ENCODE measurements at regions of chr1 and their contacts with region 1.

Region 1: GRCh38 chr1:89358287-89358893 is 5.5 kb upstream of the GBP6 start:
- DNase-seq: peak; percentile 92
- ATAC-seq: peak; percentile 85
- H3K4me3 Mint-ChIP-seq: peak overlapping the region; percentile 20
- H3K27ac Mint-ChIP-seq: peak overlapping the region; percentile 82
- H3K4me1 Mint-ChIP-seq: peaks cover 61% of the 10 kb centered on the region
- H3K27me3 Mint-ChIP-seq: no peaks in the 10 kb centered on the region

Region 2: GRCh38 chr1:89085781-89086180 is 272.6 kb before region 1 on chr1:
- CTCF ChIA-PET with region 1: interaction called, 16 read pairs
- DNase-seq: peak; percentile 56
- ATAC-seq: peak; percentile 64
- H3K4me3 Mint-ChIP-seq: no peak overlapping the region
- H3K27ac Mint-ChIP-seq: no peak overlapping the region
- H3K4me1 Mint-ChIP-seq: peaks cover 7% of the 10 kb centered on the region
- H3K27me3 Mint-ChIP-seq: no peaks in the 10 kb centered on the region

Region 3: DNA sequence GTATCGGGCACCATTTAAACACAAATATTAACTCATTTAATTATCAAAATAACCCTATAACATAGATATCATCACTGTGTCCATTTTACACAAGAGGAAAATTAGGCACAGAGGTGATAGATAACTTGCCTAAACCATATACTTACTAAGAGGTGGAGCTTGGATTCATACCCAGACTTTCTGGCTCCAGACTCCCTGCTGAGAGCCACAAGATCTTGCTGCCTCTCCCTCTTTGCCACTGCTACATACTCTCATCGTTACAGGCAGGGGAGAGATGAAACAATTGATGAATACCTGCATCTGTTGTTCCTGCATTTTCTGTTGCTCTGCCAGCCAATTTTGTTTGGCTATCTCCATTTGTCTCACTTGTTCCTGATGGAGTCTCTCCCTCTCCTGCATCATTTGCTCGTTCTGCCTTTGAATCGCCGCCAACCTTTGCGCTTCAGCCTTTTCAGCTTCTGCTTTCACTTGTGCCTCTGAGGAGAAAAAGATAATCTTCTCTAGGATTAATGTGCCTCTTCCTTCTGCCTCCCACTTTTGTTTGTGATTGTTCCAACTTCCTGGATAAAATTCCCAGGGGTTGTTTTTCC is 96.4 kb before region 1 on chr1:
- CTCF ChIA-PET with region 1: interaction called, 20 read pairs
- DNase-seq: no peak
- ATAC-seq: no peak
- H3K4me3 Mint-ChIP-seq: peak overlapping the region; percentile 31
- H3K27ac Mint-ChIP-seq: peak overlapping the region; percentile 37
- H3K4me1 Mint-ChIP-seq: peaks cover 74% of the 10 kb centered on the region
- H3K27me3 Mint-ChIP-seq: no peaks in the 10 kb centered on the region

Region 4: GRCh38 chr1:89286549-89287180 is 71.7 kb before region 1 on chr1:
- CTCF ChIA-PET with region 1: interaction called, 13 read pairs
- DNase-seq: no peak
- ATAC-seq: peak; percentile 88
- H3K4me3 Mint-ChIP-seq: peak overlapping the region; percentile 27
- H3K27ac Mint-ChIP-seq: peak overlapping the region; percentile 97
- H3K4me1 Mint-ChIP-seq: peaks cover 74% of the 10 kb centered on the region
- H3K27me3 Mint-ChIP-seq: no peaks in the 10 kb centered on the region

Measured in activated CD8-positive, alpha-beta memory T cell treated with anti-CD3 and anti-CD28 coated beads, Interleukin-2, amount 10 ng/mL, durations not matched to agents 7 days and 5 days (primary cell).